ENCODE measurements at regions of chr14 and their contacts with region 1.

Region 1: GRCh38 chr14:23588884-23589598 is 10.5 kb upstream of the JPH4 start:
- DNase-seq: peak; percentile 98
- ATAC-seq: peak; percentile 98
- H3K4me3 ChIP-seq: peak overlapping the region in 1 of 3 experiments; percentile 9; a peak in 2 of 6 replicates
- H3K27ac ChIP-seq: no peak overlapping the region
- H3K4me1 ChIP-seq: peaks cover 24% of the 10 kb centered on the region
- H3K27me3 ChIP-seq: no peaks in the 10 kb centered on the region
- CTCF ChIP-seq: peak; percentile 100
- EP300 ChIP-seq: peak; percentile 87 to 90
- POLR2A ChIP-seq: no peak
- RAD21 ChIP-seq: peak; percentile 100

Region 2: DNA sequence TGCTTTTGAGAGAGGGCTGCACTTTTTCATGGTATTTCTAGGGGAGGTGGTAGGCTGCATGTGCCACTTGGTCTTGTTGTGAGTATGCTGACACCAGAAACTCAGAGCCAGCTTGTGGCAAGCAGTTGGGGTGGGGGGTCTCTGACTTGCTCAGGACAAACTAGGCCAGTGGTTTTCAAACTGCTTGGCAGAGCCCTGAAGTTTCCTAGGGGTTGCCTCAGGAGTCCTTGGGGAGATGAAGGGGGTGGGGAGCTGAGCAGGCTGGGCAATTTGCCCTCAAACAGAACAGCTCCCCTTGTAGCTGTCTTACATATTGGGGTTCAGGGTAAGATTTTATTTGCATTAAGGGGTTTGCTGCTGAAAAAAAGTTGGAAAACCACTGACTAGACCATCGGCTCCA is 278.5 kb before region 1 on chr14:
- CTCF ChIA-PET with region 1: no interaction called
- POLR2A ChIA-PET with region 1: no interaction called
- in situ Hi-C with region 1: no loop called
- intact Hi-C with region 1: no loop called
- DNase-seq: no peak
- ATAC-seq: no peak
- H3K4me3 ChIP-seq: no peak overlapping the region
- H3K27ac ChIP-seq: no peak overlapping the region
- H3K4me1 ChIP-seq: peaks cover 32% of the 10 kb centered on the region
- H3K27me3 ChIP-seq: no peaks in the 10 kb centered on the region; a peak in 1 of 5 replicates
- CTCF ChIP-seq: no peak
- EP300 ChIP-seq: no peak
- POLR2A ChIP-seq: no peak
- RAD21 ChIP-seq: no peak

Region 3: GRCh38 chr14:23512156-23512555 is 76.9 kb before region 1 on chr14:
- CTCF ChIA-PET with region 1: no interaction called
- POLR2A ChIA-PET with region 1: no interaction called
- in situ Hi-C with region 1: no loop called
- intact Hi-C with region 1: no loop called
- DNase-seq: no peak
- ATAC-seq: no peak
- H3K4me3 ChIP-seq: no peak overlapping the region
- H3K27ac ChIP-seq: no peak overlapping the region
- H3K4me1 ChIP-seq: no peaks in the 10 kb centered on the region
- H3K27me3 ChIP-seq: no peaks in the 10 kb centered on the region
- CTCF ChIP-seq: no peak
- EP300 ChIP-seq: no peak
- POLR2A ChIP-seq: no peak
- RAD21 ChIP-seq: no peak

Region 4: DNA sequence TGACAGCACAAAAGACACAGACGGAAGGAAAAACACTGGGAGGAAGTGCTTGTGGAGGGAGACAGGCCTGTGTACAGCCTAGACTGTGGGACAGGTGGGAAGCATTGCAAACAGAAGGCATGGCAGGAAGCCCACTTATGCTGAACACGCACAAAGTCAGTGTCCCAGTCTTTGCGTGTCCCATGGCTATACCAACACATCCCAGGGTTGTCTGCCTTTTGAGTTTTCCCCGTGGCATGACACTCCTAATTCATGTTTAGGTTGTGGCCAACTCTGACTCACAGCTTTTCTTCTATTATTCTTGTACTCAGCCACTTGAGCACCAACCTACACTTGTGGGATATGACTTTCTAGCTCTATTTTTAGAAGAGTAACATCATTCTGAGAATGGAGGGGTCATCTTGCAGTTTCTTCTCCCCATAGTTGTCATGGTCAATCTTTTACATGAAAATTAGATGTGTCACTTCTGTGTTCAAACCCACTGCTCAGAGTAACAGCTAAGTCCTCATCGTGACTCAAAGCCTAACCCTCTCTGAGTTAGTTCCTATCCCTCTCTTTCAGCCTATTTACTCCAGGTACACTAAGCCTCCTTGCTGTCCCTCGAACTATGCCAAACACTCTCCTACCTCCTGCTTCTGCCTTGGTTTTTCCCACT is 17.0 kb after region 1 on chr14:
- CTCF ChIA-PET with region 1: interaction called, 9 read pairs
- POLR2A ChIA-PET with region 1: interaction called, 142 read pairs
- in situ Hi-C with region 1: no loop called
- intact Hi-C with region 1: loop called (anchors 1 kb)
- DNase-seq: no peak
- ATAC-seq: no peak
- H3K4me3 ChIP-seq: no peak overlapping the region
- H3K27ac ChIP-seq: no peak overlapping the region
- H3K4me1 ChIP-seq: peaks cover 88% of the 10 kb centered on the region
- H3K27me3 ChIP-seq: no peaks in the 10 kb centered on the region
- CTCF ChIP-seq: no peak
- EP300 ChIP-seq: no peak
- POLR2A ChIP-seq: 0 out of 4 replicates have a peak, but pooled peaks of 1 of the 2 experiments have one; percentile 7
- RAD21 ChIP-seq: no peak

Region 5: GRCh38 chr14:23621204-23621931 is 32.3 kb after region 1 on chr14:
- CTCF ChIA-PET with region 1: interaction called, 15 read pairs
- POLR2A ChIA-PET with region 1: interaction called, 9 read pairs
- in situ Hi-C with region 1: no loop called
- intact Hi-C with region 1: no loop called
- DNase-seq: no peak
- ATAC-seq: peak; percentile 41
- H3K4me3 ChIP-seq: no peak overlapping the region
- H3K27ac ChIP-seq: no peak overlapping the region
- H3K4me1 ChIP-seq: peaks cover 44% of the 10 kb centered on the region
- H3K27me3 ChIP-seq: no peaks in the 10 kb centered on the region
- CTCF ChIP-seq: no peak
- EP300 ChIP-seq: no peak
- POLR2A ChIP-seq: no peak
- RAD21 ChIP-seq: no peak

Region 6: GRCh38 chr14:23646648-23647549 is 57.9 kb after region 1 on chr14:
- CTCF ChIA-PET with region 1: no interaction called
- POLR2A ChIA-PET with region 1: interaction called, 924 read pairs
- in situ Hi-C with region 1: no loop called
- intact Hi-C with region 1: no loop called
- DNase-seq: peak; percentile 76
- ATAC-seq: peak; percentile 4
- H3K4me3 ChIP-seq: no peak overlapping the region
- H3K27ac ChIP-seq: peak overlapping the region; percentile 3
- H3K4me1 ChIP-seq: peaks cover 27% of the 10 kb centered on the region
- H3K27me3 ChIP-seq: peaks cover 0 to 18% of the 10 kb centered on the region in 2 experiments; a peak in 1 of 5 replicates
- CTCF ChIP-seq: no peak; the same call in 1 of the 2 replicates
- EP300 ChIP-seq: 0 out of 4 replicates have a peak, but pooled peaks of 1 of the 2 experiments have one; percentile 17
- POLR2A ChIP-seq: peak in 1 of 2 experiments; percentile 97; a peak in 2 of 4 replicates
- RAD21 ChIP-seq: peak; percentile 77

Region 7: DNA sequence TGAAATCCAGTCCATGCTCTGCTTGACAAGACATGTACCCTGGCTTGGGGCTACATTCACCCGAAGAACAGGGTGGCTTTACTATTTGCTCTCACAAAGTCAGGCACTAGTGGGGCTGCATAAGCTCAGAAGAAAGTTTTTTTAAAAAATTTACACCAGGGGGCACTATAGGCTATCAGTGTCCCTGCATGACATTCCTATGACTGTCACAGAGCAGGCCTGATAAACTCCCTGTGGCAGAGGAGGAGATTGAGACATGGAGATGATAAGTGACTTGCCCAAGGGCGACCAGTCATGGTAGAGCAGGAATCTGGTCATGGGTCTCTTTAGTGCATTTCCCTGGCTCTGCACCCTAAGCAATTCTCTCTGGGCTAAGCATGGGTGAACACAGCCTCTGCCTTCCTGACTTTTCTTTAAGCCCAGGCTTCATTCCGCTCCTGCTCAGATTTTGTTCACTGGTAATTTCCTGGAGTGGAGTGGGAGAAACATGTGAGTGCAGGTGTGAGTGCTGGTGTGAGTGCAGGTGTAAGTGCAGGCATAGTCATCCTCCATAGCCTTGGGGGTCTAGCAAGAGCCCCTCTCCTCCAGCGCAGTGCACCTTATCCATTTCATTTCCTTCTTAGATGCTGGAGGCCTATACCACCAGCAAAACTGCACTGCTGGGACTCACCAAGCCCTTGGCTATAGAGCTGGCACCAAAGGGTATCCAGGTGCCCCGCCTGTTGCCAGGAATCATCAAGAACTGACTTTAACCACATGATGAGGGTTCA is 138.7 kb after region 1 on chr14:
- CTCF ChIA-PET with region 1: interaction called, 5 read pairs
- POLR2A ChIA-PET with region 1: interaction called, 4 read pairs
- in situ Hi-C with region 1: no loop called
- intact Hi-C with region 1: loop called (anchors 1 kb)
- DNase-seq: peak; percentile 90
- ATAC-seq: peak; percentile 88
- H3K4me3 ChIP-seq: no peak overlapping the region
- H3K27ac ChIP-seq: no peak overlapping the region
- H3K4me1 ChIP-seq: peaks cover 6% of the 10 kb centered on the region
- H3K27me3 ChIP-seq: no peaks in the 10 kb centered on the region; a peak in 1 of 5 replicates
- CTCF ChIP-seq: peak; percentile 91
- EP300 ChIP-seq: no peak
- POLR2A ChIP-seq: no peak
- RAD21 ChIP-seq: peak; percentile 90

Region 8: DNA sequence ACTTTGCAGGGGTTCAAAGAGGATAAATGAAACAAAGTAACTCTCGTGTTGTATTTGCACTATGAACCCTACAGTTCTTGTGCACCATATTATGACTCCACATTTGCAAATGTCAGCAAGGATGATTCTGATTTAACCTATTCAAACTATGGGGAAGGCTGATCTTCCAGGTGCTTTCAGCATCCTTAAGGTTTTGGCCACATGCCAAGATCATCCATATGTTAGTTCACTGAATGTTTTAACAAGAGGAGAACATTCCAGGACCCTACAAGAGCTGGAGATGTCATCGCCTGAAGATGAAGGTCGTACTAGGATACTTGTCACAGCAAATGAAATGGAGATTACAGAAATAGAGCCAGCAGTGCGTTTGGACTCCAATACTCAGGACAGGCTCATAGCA is 161.3 kb after region 1 on chr14:
- CTCF ChIA-PET with region 1: no interaction called
- POLR2A ChIA-PET with region 1: no interaction called
- in situ Hi-C with region 1: no loop called
- intact Hi-C with region 1: no loop called
- DNase-seq: no peak
- ATAC-seq: no peak
- H3K4me3 ChIP-seq: no peak overlapping the region
- H3K27ac ChIP-seq: no peak overlapping the region
- H3K4me1 ChIP-seq: no peaks in the 10 kb centered on the region
- H3K27me3 ChIP-seq: peaks cover 0 to 10% of the 10 kb centered on the region in 2 experiments; a peak in 1 of 5 replicates
- CTCF ChIP-seq: no peak
- EP300 ChIP-seq: no peak
- POLR2A ChIP-seq: no peak
- RAD21 ChIP-seq: no peak

Region 9: DNA sequence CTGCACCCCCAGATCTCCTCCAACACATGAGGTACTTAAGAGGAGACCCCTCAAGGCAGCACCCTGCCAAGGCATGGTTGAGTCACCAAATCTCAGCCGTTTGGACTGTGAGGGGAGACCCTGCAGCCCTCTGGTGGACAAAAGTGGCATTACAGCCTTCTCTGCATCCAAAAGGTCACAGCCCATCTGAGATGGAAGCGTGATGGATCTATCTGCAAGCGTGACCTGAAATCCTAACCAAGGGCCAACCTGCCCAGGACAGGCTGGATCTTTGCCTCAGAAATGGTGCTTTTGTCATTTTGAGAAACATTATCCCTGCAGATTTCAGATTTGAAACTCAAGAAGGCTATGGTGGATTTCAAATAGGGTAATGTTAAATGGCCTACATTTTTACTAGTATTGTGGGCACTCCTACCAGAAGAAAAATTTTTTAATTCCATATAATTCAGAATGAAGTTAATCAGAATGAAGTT is 340.8 kb after region 1 on chr14:
- CTCF ChIA-PET with region 1: interaction called, 31 read pairs
- POLR2A ChIA-PET with region 1: interaction called, 4 read pairs
- in situ Hi-C with region 1: no loop called
- intact Hi-C with region 1: loop called (anchors 1 kb)
- DNase-seq: peak; percentile 87
- ATAC-seq: peak; percentile 94
- H3K4me3 ChIP-seq: no peak overlapping the region
- H3K27ac ChIP-seq: no peak overlapping the region
- H3K4me1 ChIP-seq: peaks cover 11% of the 10 kb centered on the region
- H3K27me3 ChIP-seq: no peaks in the 10 kb centered on the region
- CTCF ChIP-seq: peak; percentile 93
- EP300 ChIP-seq: no peak
- POLR2A ChIP-seq: no peak
- RAD21 ChIP-seq: peak; percentile 87